Mammary epithelial cell (primary cell): ENCODE measurements at regions of chr2 and their contacts with region 1.

Region 1: GRCh38 chr2:98649135-98649991 is 41.0 kb downstream of the UNC50 start:
- DNase-seq: peak; percentile 65
- H3K4me3 ChIP-seq: no peak overlapping the region
- H3K27ac ChIP-seq: no peak overlapping the region
- H3K4me1 ChIP-seq: peaks cover 7% of the 10 kb centered on the region
- H3K27me3 ChIP-seq: no peaks in the 10 kb centered on the region
- CTCF ChIP-seq: peak; percentile 99

Region 2: DNA sequence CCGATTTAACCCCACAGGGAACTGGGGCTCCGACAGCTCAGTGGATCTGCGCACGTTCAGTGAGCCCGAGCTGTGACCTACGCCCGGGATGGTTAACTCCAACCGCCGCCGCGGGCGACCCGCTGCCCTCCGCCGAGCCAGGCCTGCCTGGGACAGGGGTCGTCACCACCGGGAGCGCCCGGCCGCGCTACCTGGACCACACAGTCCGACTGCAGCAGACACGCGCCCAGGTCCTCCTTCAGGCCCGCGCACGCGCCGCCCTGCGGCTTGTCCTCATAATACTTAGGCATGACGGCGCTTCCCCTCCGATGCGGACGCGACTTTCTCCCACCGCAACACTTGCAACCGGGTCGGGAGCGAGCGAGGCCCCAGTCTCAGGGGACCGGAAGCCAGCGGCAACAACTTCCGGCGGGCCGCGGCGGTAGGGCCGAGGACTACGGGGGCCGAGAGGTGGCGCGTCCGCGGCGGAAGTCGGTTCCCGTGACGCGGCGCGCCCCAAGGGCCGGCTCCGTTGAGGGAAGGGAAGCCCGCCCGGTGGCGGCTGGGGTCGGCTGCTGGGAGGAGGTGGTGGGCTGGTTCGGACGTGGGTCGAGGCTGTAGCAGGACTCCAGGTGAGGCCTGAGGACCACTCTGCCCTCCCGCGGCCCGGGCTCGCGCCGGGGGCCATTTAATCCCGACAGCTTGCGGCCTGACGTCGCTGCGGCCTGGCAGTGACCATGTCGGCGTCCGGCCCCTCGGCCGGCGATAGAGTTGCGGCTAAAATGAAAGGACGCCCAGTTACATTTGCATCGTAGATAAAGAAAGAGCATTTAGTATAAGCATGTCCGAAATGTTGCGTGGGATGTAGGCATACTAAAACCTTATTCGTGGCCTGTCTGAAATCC is 41.0 kb before region 1 on chr2 and contains the starts of genes COA5 and UNC50:
- CTCF ChIA-PET with region 1: no interaction called
- dilution Hi-C with region 1: no loop called
- in situ Hi-C with region 1: no loop called
- intact Hi-C with region 1: loop called (anchors 2 kb)
- DNase-seq: peak; percentile 88
- H3K4me3 ChIP-seq: peak within 1 kb of the TSS; percentile 77 to 92 (median 91)
- H3K27ac ChIP-seq: peak within 1 kb of the TSS; percentile 89
- H3K4me1 ChIP-seq: peaks cover 22% of the 10 kb centered on the region
- H3K27me3 ChIP-seq: no peaks in the 10 kb centered on the region
- CTCF ChIP-seq: peak in 1 of 2 donors; percentile 10
- total RNA-seq, gene COA5: 16.5 to 20.5 TPM
- total RNA-seq, gene UNC50: 33.0 to 38.4 TPM

Region 3: GRCh38 chr2:98731041-98731893 is 81.9 kb after region 1 on chr2 and contains the start of gene MGAT4A:
- CTCF ChIA-PET with region 1: interaction called, 6 read pairs
- dilution Hi-C with region 1: no loop called
- in situ Hi-C with region 1: no loop called
- intact Hi-C with region 1: loop called (anchors 1 kb)
- DNase-seq: peak; percentile 43
- H3K4me3 ChIP-seq: peak within 1 kb of the TSS; percentile 65 to 72 (median 68)
- H3K27ac ChIP-seq: no peak within 1 kb of the TSS
- H3K4me1 ChIP-seq: peaks cover 17% of the 10 kb centered on the region
- H3K27me3 ChIP-seq: no peaks in the 10 kb centered on the region
- CTCF ChIP-seq: no peak
- total RNA-seq, gene MGAT4A: 2.0 to 4.3 TPM

Region 4: DNA sequence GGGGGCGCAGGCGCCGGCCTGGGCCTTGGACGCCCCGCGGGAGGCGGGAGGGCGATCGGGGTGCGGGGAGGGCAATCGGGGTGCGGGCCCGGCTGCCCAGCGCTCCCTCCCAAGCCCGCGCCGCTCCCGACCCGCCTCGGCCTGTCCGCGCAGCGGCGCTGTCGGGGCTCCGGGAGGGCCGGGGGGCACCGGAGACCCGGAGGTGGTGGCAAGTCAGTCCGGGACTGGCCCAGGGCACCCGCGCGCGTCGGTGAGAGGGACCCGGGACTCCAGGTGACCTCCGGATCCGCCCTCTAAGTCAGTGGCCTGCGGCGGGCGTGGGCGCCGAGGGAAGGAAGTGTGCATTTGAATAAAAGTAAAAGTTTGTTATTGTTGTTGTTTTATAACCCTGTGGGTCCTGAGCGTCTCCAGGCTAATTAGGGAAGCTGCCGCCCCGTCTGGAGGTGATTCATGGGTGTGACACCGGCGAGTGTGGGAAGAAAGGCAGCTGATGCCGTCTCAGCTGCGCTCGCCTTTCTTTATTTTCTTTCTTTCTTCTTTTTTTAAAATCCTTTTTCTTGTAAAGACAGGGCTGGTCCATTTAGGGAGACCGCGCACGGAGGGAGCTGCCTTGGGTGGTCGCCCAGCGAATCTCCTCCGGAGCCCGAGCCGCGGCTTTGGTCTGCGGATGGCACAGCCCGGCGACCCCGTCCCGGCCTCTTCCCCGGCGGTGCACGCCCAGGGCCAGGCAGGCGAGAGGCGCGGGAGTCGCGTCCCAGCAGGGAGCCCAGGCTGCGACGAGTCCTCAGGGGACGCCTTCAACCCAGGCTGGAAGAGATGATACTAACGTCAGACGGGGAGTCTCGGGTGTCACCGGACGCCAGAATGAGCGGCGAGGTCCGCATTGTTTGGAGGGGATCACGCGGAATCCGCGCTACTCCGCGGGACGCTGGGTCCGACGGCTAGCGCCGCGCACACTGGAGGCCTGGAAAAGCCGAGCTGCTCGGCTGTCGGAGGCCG is 287.3 kb after region 1 on chr2:
- CTCF ChIA-PET with region 1: interaction called, 3 read pairs
- dilution Hi-C with region 1: no loop called
- in situ Hi-C with region 1: no loop called
- intact Hi-C with region 1: loop called (anchors 2 kb)
- DNase-seq: peak; percentile 53
- H3K4me3 ChIP-seq: peak overlapping the region; percentile 66 to 78 (median 71)
- H3K27ac ChIP-seq: peak overlapping the region; percentile 59
- H3K4me1 ChIP-seq: peaks cover 18% of the 10 kb centered on the region
- H3K27me3 ChIP-seq: no peaks in the 10 kb centered on the region
- CTCF ChIP-seq: peak; percentile 10 to 42